ENCODE measurements at regions of chr20 and their contacts with region 1.

Region 1: DNA sequence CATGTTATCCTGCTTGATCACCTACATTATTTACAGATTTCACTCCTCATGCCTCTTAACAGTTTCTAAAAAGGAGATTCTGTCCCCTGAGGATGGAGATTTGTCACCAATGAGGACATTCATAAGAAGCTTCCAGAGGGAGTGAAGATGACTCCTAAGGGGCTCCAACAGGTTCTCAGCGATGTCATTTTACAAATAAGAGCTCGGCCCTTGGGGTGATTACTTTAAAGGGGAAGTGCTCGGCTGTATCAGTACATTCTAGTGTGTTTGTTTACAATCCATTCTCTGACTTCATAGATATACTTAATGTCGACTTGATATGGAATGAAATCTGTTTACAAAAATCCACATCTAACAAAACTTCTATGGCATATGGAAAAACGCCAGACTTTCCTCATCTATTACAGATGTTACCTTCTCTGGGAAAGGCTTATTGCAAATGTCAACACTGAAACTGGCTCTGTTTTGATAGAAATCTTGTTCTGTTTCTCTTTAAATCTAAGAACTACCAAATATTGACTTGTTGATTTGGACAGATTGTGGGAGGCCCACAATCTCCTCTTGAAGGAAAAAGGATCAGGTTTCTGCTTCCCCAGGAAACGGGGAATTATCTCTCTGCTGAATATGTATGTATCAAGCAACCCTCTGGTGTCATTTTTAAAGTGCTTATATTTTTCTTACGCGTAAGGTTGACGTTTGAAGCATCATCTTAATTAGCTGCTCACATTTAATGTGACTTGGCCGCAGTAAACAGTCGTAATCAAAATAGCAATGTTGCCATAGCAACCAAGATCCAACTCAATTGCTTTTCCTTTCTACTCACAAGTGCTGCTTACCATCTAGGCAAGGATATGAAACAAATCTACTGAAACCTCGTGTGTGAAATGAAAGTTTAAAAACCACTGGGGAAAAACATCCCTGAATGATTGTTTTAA is 95.7 kb downstream of the SHLD1 start:
- DNase-seq: no peak
- H3K4me3 ChIP-seq: peak overlapping the region; percentile 3 to 34
- H3K27ac ChIP-seq: peak overlapping the region; percentile 22
- H3K4me1 ChIP-seq: peaks cover 12% of the 10 kb centered on the region
- H3K27me3 ChIP-seq: no peaks in the 10 kb centered on the region
- CTCF ChIP-seq: no peak
- POLR2A ChIP-seq: no peak

Region 2: DNA sequence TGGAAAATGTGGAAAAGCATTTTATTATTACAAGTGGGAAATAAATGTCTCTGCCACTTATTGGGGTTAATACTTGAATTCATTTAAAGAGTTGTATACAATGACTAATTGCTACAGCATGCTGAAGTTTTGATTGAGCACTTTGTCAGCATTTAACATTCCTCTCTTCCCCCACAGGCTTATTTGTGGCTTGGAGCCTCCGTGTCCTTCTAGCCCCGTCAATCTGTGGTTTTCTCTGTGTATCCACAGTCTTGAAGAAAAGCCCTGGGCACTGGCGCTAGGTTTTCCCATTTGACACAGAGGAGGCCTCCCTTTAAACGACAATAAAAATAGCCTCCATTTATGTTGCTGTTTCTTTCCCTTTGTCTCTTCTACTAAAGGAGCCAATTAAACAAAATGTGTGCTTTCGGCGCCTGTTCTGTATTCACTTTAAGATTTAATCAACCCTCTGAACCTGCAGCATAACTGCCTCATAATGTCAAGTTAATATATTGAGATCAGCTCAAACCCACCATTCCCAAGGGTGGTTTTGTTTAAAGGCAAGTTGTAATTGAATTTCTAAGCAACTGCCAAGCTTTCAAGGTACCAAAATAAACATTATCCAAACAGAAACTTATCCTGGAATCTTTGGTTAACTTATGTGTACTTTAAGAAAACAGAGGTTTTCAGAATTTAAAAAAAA is 1504.0 kb before region 1 on chr20:
- intact Hi-C with region 1: loop called (anchors 5 kb)
- DNase-seq: no peak
- H3K4me3 ChIP-seq: no peak overlapping the region
- H3K27ac ChIP-seq: peak overlapping the region; percentile 9
- H3K4me1 ChIP-seq: peaks cover 13% of the 10 kb centered on the region
- H3K27me3 ChIP-seq: no peaks in the 10 kb centered on the region
- CTCF ChIP-seq: no peak
- POLR2A ChIP-seq: no peak

Region 3: DNA sequence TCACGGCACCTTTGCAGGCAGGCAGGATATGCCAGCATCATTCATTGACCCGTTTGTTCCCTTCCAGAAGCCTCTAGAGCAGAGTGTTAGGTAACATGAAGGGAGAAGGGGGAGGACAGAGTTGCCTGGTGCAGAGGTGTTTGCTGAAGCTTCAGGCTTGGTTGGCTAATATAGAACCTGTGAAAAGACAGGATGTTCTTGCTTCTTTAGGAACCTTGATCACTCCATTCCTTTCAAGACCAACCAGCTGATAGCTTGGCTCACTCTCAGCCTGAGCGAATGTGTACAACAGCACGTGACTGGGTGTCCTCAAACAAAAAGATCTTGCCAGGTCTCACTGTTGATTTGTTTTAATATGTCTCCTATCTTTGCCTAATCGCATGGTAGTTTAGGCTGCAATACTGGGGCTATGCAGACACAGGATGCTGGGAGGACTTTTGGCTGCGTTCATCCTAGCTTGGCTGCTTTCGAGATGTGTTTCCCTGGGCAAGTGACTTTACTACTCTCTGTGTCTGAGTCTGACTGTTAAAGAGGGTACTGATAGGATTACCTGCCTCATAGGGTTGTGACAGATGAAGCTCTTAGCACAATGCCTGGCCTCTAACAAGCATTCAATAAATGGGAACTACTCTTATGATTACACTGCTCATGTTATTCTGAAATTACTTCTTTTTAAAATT is 79.7 kb before region 1 on chr20:
- intact Hi-C with region 1: no loop called
- DNase-seq: no peak
- H3K4me3 ChIP-seq: no peak overlapping the region
- H3K27ac ChIP-seq: no peak overlapping the region
- H3K4me1 ChIP-seq: no peaks in the 10 kb centered on the region
- H3K27me3 ChIP-seq: no peaks in the 10 kb centered on the region
- CTCF ChIP-seq: no peak
- POLR2A ChIP-seq: no peak

Measured in vagina (tissue), 2 donors.